OCI-LY7 (cell line): ENCODE measurements at regions of chr21 and their contacts with region 1.

Region 1: GRCh38 chr21:42983103-42983502 is 8.7 kb downstream of the PKNOX1 start:
- DNase-seq: no peak
- H3K4me3 ChIP-seq: no peak overlapping the region
- H3K27ac ChIP-seq: no peak overlapping the region
- H3K4me1 ChIP-seq: peaks cover 35% of the 10 kb centered on the region
- CTCF ChIP-seq: no peak

Region 2: GRCh38 chr21:42695697-42696380 is 287.3 kb before region 1 on chr21:
- CTCF ChIA-PET with region 1: no interaction called
- POLR2A ChIA-PET with region 1: no interaction called
- intact Hi-C with region 1: no loop called
- DNase-seq: no peak
- H3K4me3 ChIP-seq: no peak overlapping the region
- H3K27ac ChIP-seq: no peak overlapping the region
- H3K4me1 ChIP-seq: no peaks in the 10 kb centered on the region
- CTCF ChIP-seq: no peak

Region 3: GRCh38 chr21:43015921-43016540 is 32.9 kb after region 1 on chr21:
- CTCF ChIA-PET with region 1: no interaction called
- POLR2A ChIA-PET with region 1: no interaction called
- intact Hi-C with region 1: loop called (anchors 5 kb)
- DNase-seq: peak; percentile 20
- H3K4me3 ChIP-seq: no peak overlapping the region
- H3K27ac ChIP-seq: peak overlapping the region; percentile 35
- H3K4me1 ChIP-seq: peaks cover 35% of the 10 kb centered on the region
- CTCF ChIP-seq: no peak